ENCODE measurements at regions of chr12 and their contacts with region 1.

Region 1: DNA sequence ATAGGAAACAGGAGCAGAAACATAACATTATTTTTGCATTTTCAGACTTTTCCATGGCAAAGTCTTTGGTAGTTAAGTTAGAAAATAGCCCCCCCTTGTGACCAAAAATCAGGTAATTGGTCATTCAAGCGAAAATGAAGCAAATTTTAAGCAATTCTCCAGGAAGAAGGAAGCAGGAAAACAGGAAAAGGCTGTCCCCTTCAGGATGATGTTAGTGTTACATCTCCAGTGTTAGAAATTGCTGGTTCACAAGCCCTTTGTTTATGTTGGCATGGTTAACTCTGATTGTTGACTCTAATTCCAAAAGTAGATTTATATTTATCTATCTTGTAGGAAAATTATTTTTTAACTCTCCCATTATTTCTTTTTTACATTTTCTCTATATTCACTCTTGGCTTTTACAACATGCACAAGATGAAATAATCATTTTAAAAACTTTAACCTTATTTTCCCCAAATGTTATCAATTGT is 18.8 kb upstream of the GAS2L3 start:
- DNase-seq: peak; percentile 77
- H3K4me3 ChIP-seq: peak overlapping the region in 1 of 2 experiments; percentile 36; a peak in 1 of 4 replicates
- H3K27ac ChIP-seq: no peak overlapping the region
- H3K4me1 ChIP-seq: no peaks in the 10 kb centered on the region
- H3K27me3 ChIP-seq: no peaks in the 10 kb centered on the region
- CTCF ChIP-seq: peak; percentile 96
- EP300 ChIP-seq: no peak
- RAD21 ChIP-seq: peak; percentile 96

Region 2: DNA sequence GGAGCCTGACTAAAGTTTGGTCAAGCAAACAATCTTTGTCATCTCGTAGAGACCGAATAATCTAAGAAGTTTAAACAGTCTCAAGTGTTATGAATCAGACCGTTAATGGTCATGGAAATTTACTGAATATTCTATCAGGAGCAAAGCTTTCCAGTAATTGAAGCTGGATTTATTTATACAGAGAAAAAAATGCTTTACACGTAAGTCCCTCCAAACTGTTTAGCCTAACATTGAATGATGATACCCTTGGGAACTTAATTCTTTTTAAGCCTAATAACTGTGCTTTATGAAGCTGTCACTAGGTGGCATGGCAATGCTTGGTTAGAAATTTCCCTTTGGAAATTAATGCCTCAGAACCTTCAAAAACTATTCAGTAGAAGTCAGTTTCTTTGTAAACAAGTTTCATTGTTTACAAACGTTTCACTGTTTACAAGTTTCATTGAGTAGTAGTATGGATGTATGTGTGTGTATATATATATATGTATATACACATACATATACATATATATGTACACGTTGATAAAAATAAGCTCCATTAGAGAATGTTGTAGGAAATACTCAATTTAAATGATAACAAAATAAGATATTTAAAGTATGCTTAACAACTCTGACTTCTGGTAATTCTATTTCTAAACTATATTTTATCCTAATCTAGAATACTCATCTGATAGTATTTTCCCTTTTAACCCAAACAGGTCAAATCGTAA is 319.9 kb before region 1 on chr12:
- CTCF ChIA-PET with region 1: interaction called, 52 read pairs
- POLR2A ChIA-PET with region 1: no interaction called
- DNase-seq: peak; percentile 38
- H3K4me3 ChIP-seq: no peak overlapping the region; a peak in 1 of 4 replicates
- H3K27ac ChIP-seq: no peak overlapping the region
- H3K4me1 ChIP-seq: no peaks in the 10 kb centered on the region
- H3K27me3 ChIP-seq: no peaks in the 10 kb centered on the region
- CTCF ChIP-seq: peak; percentile 83
- EP300 ChIP-seq: no peak
- RAD21 ChIP-seq: peak; percentile 89

Region 3: DNA sequence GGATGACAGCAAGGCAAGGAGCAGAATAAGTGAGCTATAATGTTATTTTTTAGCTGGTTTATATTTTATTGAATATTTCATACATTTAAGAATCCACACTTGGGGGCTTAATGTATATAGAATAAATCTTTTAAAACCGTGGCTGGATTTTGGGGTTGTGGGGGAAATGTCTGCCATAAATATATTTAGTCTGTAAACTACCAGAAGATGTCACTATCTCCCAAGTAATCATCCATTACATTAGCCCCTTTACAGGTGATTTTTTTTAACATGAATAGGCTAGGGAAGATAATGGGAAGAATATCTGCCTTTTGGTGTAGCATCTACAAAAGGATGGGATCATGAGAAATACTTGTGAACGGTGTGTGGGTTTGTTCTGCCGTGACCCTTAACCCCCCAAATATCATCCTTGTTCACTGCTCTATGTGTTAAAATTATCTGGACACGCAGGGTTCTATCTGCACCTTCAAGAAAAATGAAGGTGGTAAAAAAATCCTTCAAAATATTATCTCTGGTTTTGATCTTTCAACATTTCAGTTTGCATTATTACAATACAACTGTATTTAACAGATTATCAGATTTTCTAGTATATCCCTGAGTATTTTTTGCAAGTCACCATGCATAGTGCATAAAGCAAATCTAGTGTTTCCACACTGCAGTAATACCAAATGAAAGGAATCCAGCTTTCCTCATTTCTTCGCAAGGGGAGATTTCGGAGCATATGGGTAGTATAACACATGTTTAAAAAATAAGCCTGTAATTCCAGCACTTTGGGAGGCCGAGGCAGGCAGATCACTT is 205.8 kb before region 1 on chr12:
- CTCF ChIA-PET with region 1: interaction called, 61 read pairs
- POLR2A ChIA-PET with region 1: no interaction called
- DNase-seq: peak; percentile 55
- H3K4me3 ChIP-seq: no peak overlapping the region
- H3K27ac ChIP-seq: no peak overlapping the region
- H3K4me1 ChIP-seq: no peaks in the 10 kb centered on the region
- H3K27me3 ChIP-seq: no peaks in the 10 kb centered on the region
- CTCF ChIP-seq: peak; percentile 69
- EP300 ChIP-seq: no peak
- RAD21 ChIP-seq: peak; percentile 82

Region 4: GRCh38 chr12:100464529-100464928 is 90.1 kb before region 1 on chr12:
- CTCF ChIA-PET with region 1: no interaction called
- POLR2A ChIA-PET with region 1: no interaction called
- DNase-seq: no peak
- H3K4me3 ChIP-seq: no peak overlapping the region
- H3K27ac ChIP-seq: no peak overlapping the region
- H3K4me1 ChIP-seq: no peaks in the 10 kb centered on the region
- H3K27me3 ChIP-seq: no peaks in the 10 kb centered on the region
- CTCF ChIP-seq: no peak
- EP300 ChIP-seq: no peak
- RAD21 ChIP-seq: no peak

Region 5: GRCh38 chr12:100566887-100567637 is 12.4 kb after region 1 on chr12:
- CTCF ChIA-PET with region 1: interaction called, 10 read pairs
- POLR2A ChIA-PET with region 1: no interaction called
- DNase-seq: no peak
- H3K4me3 ChIP-seq: no peak overlapping the region
- H3K27ac ChIP-seq: no peak overlapping the region
- H3K4me1 ChIP-seq: no peaks in the 10 kb centered on the region
- H3K27me3 ChIP-seq: no peaks in the 10 kb centered on the region
- CTCF ChIP-seq: no peak
- EP300 ChIP-seq: no peak
- RAD21 ChIP-seq: no peak

Region 6: GRCh38 chr12:100573292-100574186 is 18.9 kb after region 1 on chr12 and contains the start of gene GAS2L3:
- CTCF ChIA-PET with region 1: interaction called, 12 read pairs
- POLR2A ChIA-PET with region 1: no interaction called
- DNase-seq: peak; percentile 95
- H3K4me3 ChIP-seq: peak within 1 kb of the TSS; percentile 91 to 96
- H3K27ac ChIP-seq: peak within 1 kb of the TSS; percentile 38 to 65; a peak in 3 of 4 replicates
- H3K4me1 ChIP-seq: peaks cover 8 to 17% of the 10 kb centered on the region in 2 experiments
- H3K27me3 ChIP-seq: no peaks in the 10 kb centered on the region
- CTCF ChIP-seq: no peak
- EP300 ChIP-seq: peak in 1 of 2 experiments; percentile 25; a peak in 1 of 4 replicates
- RAD21 ChIP-seq: no peak
- polyA plus RNA-seq, gene GAS2L3: 1.6 TPM in 2 replicates